Activated naive CD4-positive, alpha-beta T cell treated with anti-CD3 and anti-CD28 coated beads for 36 hours (primary cell): ENCODE measurements at regions of chr6 and their contacts with region 1.

Region 1: DNA sequence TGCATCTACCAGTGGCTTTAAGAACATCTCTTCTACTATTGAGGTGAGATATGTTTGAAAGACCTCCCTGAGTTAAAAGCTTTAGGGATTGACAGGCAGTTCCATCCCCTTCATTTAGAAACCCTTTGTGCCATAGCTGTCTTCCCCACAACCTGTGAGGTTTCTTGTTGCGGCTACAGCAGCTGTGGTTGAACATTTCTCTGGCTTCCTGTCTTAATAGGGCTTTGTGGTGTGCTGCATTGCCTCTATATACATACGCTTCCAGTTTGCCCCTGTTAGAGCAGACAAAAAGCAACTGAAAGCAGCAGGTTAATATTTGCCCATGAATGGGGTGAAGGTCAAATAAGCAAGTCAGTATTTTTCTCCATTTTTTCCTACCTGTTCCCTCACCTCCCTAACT is 210.2 kb downstream of the TMEM200A start:
- DNase-seq: peak; percentile 75
- H3K4me3 Mint-ChIP-seq: peak overlapping the region; percentile 39
- H3K27ac Mint-ChIP-seq: peak overlapping the region; percentile 36
- H3K4me1 Mint-ChIP-seq: peaks cover 36% of the 10 kb centered on the region
- H3K27me3 Mint-ChIP-seq: no peaks in the 10 kb centered on the region

Region 2: GRCh38 chr6:129844118-129844891 is 731.7 kb before region 1 on chr6:
- CTCF ChIA-PET with region 1: no interaction called
- intact Hi-C with region 1: no loop called
- DNase-seq: no peak
- H3K4me3 Mint-ChIP-seq: no peak overlapping the region
- H3K27ac Mint-ChIP-seq: no peak overlapping the region
- H3K4me1 Mint-ChIP-seq: no peaks in the 10 kb centered on the region
- H3K27me3 Mint-ChIP-seq: peaks cover 2% of the 10 kb centered on the region

Region 3: DNA sequence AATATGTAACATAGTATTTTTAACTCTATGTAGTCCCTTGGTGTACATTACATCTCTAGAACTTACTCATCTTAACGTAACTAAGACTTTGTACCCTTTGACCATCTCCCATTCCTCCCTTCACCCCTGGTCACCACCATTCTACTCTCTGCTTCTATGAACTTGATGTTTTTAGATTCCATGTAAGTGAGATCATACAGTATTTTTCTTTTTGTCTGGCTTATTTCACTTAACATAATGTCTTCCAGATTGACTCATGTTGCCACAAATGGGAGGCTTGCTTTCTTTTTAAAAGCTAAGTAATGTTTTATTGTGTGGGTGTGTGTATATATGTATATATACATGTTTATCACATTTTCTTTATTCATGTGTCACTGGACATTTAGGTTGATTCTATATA is 154.4 kb before region 1 on chr6:
- CTCF ChIA-PET with region 1: no interaction called
- intact Hi-C with region 1: no loop called
- DNase-seq: no peak
- H3K4me3 Mint-ChIP-seq: no peak overlapping the region
- H3K27ac Mint-ChIP-seq: no peak overlapping the region
- H3K4me1 Mint-ChIP-seq: no peaks in the 10 kb centered on the region
- H3K27me3 Mint-ChIP-seq: no peaks in the 10 kb centered on the region

Region 4: GRCh38 chr6:130525408-130525807 is 50.6 kb before region 1 on chr6:
- CTCF ChIA-PET with region 1: no interaction called
- intact Hi-C with region 1: loop called (anchors 1 kb)
- DNase-seq: no peak
- H3K4me3 Mint-ChIP-seq: no peak overlapping the region
- H3K27ac Mint-ChIP-seq: no peak overlapping the region
- H3K4me1 Mint-ChIP-seq: peaks cover 31% of the 10 kb centered on the region
- H3K27me3 Mint-ChIP-seq: no peaks in the 10 kb centered on the region

Region 5: DNA sequence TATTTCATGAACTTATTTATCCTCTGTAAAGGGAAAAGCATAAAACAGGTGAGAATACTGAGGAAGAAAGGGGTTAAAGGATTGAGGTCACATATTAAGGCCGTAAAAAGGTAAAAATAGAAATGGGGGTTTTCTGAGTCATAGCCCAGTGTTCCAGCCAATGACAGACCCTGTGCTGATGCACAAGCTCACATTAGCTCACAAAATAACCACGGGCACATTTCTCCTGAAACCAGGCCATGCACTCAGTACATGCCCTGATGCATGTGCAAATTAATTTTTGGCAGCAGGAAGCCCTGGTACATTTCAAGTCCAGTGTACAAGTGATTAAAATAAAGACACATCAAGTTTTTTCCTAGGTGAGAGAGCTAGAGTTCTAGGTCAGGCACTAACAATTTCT is 15.7 kb before region 1 on chr6:
- CTCF ChIA-PET with region 1: interaction called, 3 read pairs
- intact Hi-C with region 1: loop called (anchors 2 kb)
- DNase-seq: no peak
- H3K4me3 Mint-ChIP-seq: no peak overlapping the region
- H3K27ac Mint-ChIP-seq: no peak overlapping the region
- H3K4me1 Mint-ChIP-seq: peaks cover 12% of the 10 kb centered on the region
- H3K27me3 Mint-ChIP-seq: no peaks in the 10 kb centered on the region

Region 6: DNA sequence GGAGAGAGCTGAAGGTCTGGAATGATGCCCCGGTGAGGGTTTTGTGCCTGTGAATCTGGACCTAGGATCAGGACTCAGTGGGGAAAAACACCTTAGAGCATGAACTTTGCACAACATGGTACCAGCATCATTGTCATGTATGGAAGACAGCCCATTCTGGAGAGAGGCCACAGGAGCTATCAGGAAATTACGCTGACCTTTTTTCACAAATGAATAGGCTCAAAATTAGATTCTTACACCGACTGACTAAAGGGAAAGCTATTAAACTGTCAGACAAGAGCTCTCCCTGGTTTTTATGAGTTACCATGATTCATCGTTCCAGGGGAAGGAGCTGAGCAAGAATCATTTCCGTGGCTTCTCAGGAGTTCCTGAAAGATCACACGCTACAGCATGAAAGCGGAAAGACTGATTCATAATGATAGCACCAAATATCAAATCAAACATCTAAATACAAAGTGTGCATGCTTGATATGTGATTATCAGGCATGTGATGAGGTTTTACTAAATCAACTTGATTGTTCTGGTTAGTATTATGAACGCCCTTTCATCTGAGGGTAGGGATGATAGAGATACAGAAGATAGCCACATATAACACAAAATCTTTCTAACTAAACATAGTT is 26.3 kb after region 1 on chr6:
- CTCF ChIA-PET with region 1: no interaction called
- intact Hi-C with region 1: loop called (anchors 1 kb)
- DNase-seq: peak; percentile 50
- H3K4me3 Mint-ChIP-seq: no peak overlapping the region
- H3K27ac Mint-ChIP-seq: peak overlapping the region; percentile 28
- H3K4me1 Mint-ChIP-seq: peaks cover 21% of the 10 kb centered on the region
- H3K27me3 Mint-ChIP-seq: no peaks in the 10 kb centered on the region

Region 7: DNA sequence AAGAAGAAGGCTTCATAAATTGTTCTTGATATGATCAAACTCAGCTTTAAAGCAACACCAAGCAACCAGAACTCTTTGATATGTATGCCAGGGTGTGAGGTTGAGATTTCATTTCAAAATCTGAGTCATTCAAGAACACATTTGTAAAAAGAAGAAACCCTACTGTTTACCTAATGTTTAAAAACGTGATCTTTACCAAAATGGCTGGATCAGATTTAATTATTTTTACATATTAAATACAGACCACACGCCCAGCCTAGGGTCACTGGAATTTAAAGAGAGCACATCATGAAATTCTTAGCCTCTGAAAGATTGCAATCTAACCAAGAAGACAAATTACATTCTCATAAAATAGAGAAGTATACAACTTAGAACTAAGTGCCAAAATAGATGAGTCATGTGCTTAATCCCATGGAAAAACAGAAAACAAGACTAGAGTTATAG is 44.4 kb after region 1 on chr6:
- CTCF ChIA-PET with region 1: no interaction called
- intact Hi-C with region 1: loop called (anchors 1 kb)
- DNase-seq: no peak
- H3K4me3 Mint-ChIP-seq: no peak overlapping the region
- H3K27ac Mint-ChIP-seq: no peak overlapping the region
- H3K4me1 Mint-ChIP-seq: peaks cover 14% of the 10 kb centered on the region
- H3K27me3 Mint-ChIP-seq: no peaks in the 10 kb centered on the region